Calu3 (cell line): ENCODE measurements at regions of chr18 and their contacts with region 1.

Region 1: GRCh38 chr18:23828426-23828825 is 139.2 kb downstream of the LAMA3 start:
- DNase-seq: peak; percentile 64
- H3K4me3 Mint-ChIP-seq: no peak overlapping the region
- H3K27ac Mint-ChIP-seq: peak overlapping the region; percentile 87
- H3K4me1 Mint-ChIP-seq: peaks cover 30% of the 10 kb centered on the region
- H3K27me3 Mint-ChIP-seq: no peaks in the 10 kb centered on the region
- CTCF ChIP-seq: no peak

Region 2: GRCh38 chr18:23452728-23453679 is 375.4 kb before region 1 on chr18 and contains the start of gene RIOK3:
- CTCF ChIA-PET with region 1: interaction called, 10 read pairs
- intact Hi-C with region 1: no loop called
- DNase-seq: peak; percentile 98
- H3K4me3 Mint-ChIP-seq: peak within 1 kb of the TSS; percentile 83
- H3K27ac Mint-ChIP-seq: peak within 1 kb of the TSS; percentile 92
- H3K4me1 Mint-ChIP-seq: peaks cover 30% of the 10 kb centered on the region
- H3K27me3 Mint-ChIP-seq: no peaks in the 10 kb centered on the region
- CTCF ChIP-seq: no peak
- total RNA-seq, gene RIOK3: 91.1 and 96.7 TPM in 2 replicates

Region 3: GRCh38 chr18:23689031-23689615 is 139.3 kb before region 1 on chr18 and contains the start of gene LAMA3:
- CTCF ChIA-PET with region 1: no interaction called
- intact Hi-C with region 1: no loop called
- DNase-seq: peak; percentile 69
- H3K4me3 Mint-ChIP-seq: peak within 1 kb of the TSS; percentile 82
- H3K27ac Mint-ChIP-seq: no peak within 1 kb of the TSS
- H3K4me1 Mint-ChIP-seq: peaks cover 15% of the 10 kb centered on the region
- H3K27me3 Mint-ChIP-seq: no peaks in the 10 kb centered on the region
- CTCF ChIP-seq: no peak
- total RNA-seq, gene LAMA3: 207 and 233 TPM in 2 replicates

Region 4: GRCh38 chr18:23871410-23871809 is 43.0 kb after region 1 on chr18:
- CTCF ChIA-PET with region 1: interaction called, 3 read pairs
- intact Hi-C with region 1: loop called (anchors 2 kb)
- DNase-seq: peak; percentile 52
- H3K4me3 Mint-ChIP-seq: peak overlapping the region; percentile 83
- H3K27ac Mint-ChIP-seq: peak overlapping the region; percentile 93
- H3K4me1 Mint-ChIP-seq: peaks cover 52% of the 10 kb centered on the region
- H3K27me3 Mint-ChIP-seq: no peaks in the 10 kb centered on the region
- CTCF ChIP-seq: no peak

Region 5: GRCh38 chr18:23918401-23919032 is 90.1 kb after region 1 on chr18:
- CTCF ChIA-PET with region 1: interaction called, 4 read pairs
- intact Hi-C with region 1: loop called (anchors 5 kb)
- DNase-seq: peak; percentile 71
- H3K4me3 Mint-ChIP-seq: no peak overlapping the region
- H3K27ac Mint-ChIP-seq: no peak overlapping the region
- H3K4me1 Mint-ChIP-seq: peaks cover 16% of the 10 kb centered on the region
- H3K27me3 Mint-ChIP-seq: no peaks in the 10 kb centered on the region
- CTCF ChIP-seq: peak; percentile 87

Region 6: DNA sequence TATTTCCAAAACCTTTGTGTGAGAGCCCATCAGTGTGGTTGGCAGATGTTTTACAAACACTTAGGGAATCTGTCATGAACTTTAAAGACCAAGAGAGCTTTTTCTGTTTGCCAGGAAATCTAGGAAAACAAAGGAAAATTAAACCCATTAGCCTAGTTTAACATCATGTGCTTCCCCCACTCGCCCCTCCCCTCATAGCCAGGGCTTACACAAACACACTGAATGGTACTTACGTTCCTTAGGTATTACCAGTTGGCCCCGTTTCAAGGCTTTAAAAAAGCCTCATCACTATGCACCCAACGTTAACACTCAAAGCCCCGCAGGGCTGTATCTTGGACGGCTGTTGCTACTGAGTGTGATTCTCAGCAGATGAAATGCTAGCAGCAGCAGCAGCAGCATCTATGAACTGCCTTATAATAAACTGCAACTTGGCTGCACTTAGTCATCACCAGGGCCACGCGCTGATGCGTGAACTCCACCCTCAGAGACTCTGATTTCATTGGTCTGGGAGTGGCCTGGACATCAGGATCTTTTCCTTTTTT is 166.0 kb after region 1 on chr18:
- CTCF ChIA-PET with region 1: no interaction called
- intact Hi-C with region 1: loop called (anchors 10 kb)
- DNase-seq: peak; percentile 47
- H3K4me3 Mint-ChIP-seq: peak overlapping the region; percentile 48
- H3K27ac Mint-ChIP-seq: no peak overlapping the region
- H3K4me1 Mint-ChIP-seq: peaks cover 46% of the 10 kb centered on the region
- H3K27me3 Mint-ChIP-seq: no peaks in the 10 kb centered on the region
- CTCF ChIP-seq: no peak

Region 7: DNA sequence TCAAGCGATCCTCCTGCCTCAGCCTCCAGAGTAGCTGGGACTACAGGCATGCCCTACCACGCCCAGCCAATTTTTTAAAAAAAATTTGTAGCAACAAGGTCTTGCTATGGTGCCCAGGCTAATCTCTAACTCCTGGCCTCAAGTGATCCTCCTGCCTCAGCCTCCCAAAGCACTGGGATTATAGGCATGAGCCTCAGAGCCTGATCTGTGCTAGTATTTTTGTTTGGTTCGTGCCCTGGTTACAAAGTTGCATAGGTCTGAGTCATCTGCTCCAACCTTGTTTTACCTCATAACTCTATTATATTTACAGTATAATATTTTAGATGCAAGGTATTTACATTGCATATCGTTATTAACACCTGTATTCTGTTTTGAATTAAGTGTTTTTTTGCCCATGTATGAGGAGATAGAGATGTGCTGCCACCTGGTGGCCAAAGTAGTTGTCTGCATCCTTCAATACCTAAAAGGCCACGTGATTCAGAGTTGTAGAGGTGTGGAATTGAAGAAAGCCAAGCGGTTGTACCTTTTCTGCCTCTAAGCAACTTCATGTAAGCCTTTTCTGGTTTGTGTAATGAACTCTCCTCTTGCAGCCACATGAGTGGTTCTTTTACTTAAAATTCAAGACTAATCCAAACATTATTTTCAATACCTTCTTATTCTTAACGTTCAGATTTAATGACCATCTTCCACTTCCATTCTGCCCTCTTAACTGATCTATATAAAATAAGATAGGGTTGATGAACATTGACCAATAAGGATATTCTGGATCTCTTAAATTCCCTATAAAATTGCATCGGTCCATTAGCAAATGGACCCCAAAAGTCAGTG is 290.5 kb after region 1 on chr18:
- CTCF ChIA-PET with region 1: no interaction called
- intact Hi-C with region 1: loop called (anchors 10 kb)
- DNase-seq: peak; percentile 74
- H3K4me3 Mint-ChIP-seq: no peak overlapping the region
- H3K27ac Mint-ChIP-seq: no peak overlapping the region
- H3K4me1 Mint-ChIP-seq: peaks cover 25% of the 10 kb centered on the region
- H3K27me3 Mint-ChIP-seq: no peaks in the 10 kb centered on the region
- CTCF ChIP-seq: peak; percentile 81